A549 (cell line): ENCODE measurements at regions of chr15 and their contacts with region 1.

Region 1: DNA sequence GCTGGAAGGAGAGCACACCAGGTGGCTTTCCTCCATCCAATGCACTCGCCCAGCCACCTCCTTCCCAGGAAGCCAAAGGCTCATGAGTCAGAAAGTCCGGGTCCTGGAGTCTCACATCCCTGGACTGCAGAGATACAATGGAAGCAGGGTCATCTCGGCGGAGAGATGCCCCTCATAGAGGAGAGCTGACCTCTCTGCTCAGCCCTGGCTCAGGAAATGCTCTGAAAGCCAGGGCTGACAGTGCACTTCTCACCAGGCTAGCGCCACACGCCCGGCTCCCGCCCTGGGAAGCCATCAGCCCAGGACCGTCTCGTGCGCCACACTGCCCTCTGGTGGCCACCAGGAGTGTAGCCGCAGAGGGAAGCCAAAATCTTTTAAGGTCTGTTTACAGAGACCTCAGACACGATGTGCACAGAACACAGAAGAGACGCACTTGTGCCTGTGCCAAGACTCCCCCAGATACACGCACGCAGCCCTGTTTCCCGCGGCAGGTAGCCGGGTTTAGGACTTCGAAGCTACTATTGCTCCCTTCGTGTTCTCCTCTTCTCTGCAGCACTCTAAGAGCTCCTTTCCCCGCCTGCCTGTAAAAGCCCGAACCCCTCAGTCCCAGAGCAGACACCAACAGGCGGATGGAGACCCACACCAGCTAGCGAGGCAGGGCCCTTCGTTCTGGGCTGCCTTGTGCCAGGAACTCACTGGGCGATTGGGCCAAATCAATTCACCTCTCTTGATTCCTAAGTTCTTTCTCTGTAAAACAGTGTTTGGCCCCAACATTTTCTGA is 9.7 kb downstream of the NTRK3 start:
- DNase-seq: peak; percentile 82 to 84
- ATAC-seq: peak; percentile 83 to 94
- H3K4me3 ChIP-seq: 0 out of 3 replicates have a peak overlapping the region, but pooled peaks have one; percentile 16
- H3K27ac ChIP-seq: peak overlapping the region; percentile 59 to 85
- H3K4me1 ChIP-seq: peaks cover 24% of the 10 kb centered on the region
- CTCF ChIP-seq: peak; percentile 97
- EP300 ChIP-seq: no peak
- POLR2A ChIP-seq: no peak
- RAD21 ChIP-seq: peak; percentile 81

Region 2: GRCh38 chr15:86624261-86625036 is 1622.4 kb before region 1 on chr15:
- CTCF ChIA-PET with region 1: interaction called, 17 read pairs
- POLR2A ChIA-PET with region 1: no interaction called
- DNase-seq: peak; percentile 93 to 97
- ATAC-seq: peak; percentile 99 to 100
- H3K4me3 ChIP-seq: no peak overlapping the region
- H3K27ac ChIP-seq: peak overlapping the region in 1 of 2 experiments; percentile 66; a peak in 3 of 6 replicates
- H3K4me1 ChIP-seq: peaks cover 19% of the 10 kb centered on the region
- CTCF ChIP-seq: peak; percentile 91
- EP300 ChIP-seq: no peak
- POLR2A ChIP-seq: no peak
- RAD21 ChIP-seq: peak; percentile 97 to 99

Region 3: GRCh38 chr15:88232801-88233201 is 14.1 kb before region 1 on chr15:
- CTCF ChIA-PET with region 1: interaction called, 51 read pairs
- POLR2A ChIA-PET with region 1: no interaction called
- DNase-seq: no peak
- ATAC-seq: no peak
- H3K4me3 ChIP-seq: no peak overlapping the region
- H3K27ac ChIP-seq: no peak overlapping the region
- H3K4me1 ChIP-seq: peaks cover 15% of the 10 kb centered on the region
- CTCF ChIP-seq: no peak
- EP300 ChIP-seq: no peak
- POLR2A ChIP-seq: no peak
- RAD21 ChIP-seq: no peak

Region 4: DNA sequence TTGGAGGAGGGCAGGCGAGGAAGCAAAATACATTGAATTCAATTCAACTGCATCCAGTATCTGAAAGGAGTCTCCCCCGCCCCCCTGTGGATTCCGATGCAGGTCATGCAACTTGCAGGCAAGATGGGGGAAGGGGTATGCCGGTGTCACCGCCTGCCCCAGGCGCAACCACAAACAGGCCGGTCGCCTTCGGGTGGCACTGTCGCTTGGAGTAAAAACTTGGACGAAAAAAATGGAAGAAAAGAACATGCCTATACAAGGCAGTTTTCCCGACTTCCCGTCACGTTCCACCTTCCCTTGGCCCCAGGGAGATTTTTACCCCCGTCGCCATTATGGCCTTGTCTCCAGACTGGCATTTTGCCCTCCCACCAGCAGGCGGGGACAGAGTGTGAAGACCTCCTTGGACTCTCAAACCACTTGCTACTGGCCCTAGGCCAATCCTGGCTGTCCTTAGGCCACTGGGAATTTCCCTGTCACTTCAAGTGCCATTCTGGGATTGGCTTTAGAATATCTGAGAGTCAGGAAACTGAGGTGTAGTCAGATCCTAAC is 11.3 kb after region 1 on chr15:
- CTCF ChIA-PET with region 1: interaction called, 39 read pairs
- POLR2A ChIA-PET with region 1: no interaction called
- DNase-seq: peak; percentile 75 to 79
- ATAC-seq: peak; percentile 9 to 51; a peak in 3 of 6 replicates
- H3K4me3 ChIP-seq: peak overlapping the region; percentile 81
- H3K27ac ChIP-seq: peak overlapping the region; percentile 87 to 92
- H3K4me1 ChIP-seq: peaks cover 33% of the 10 kb centered on the region
- CTCF ChIP-seq: peak; percentile 45
- EP300 ChIP-seq: no peak
- POLR2A ChIP-seq: no peak
- RAD21 ChIP-seq: peak in 1 of 2 experiments; percentile 50; a peak in 3 of 5 replicates

Region 5: GRCh38 chr15:88274553-88275460 is 28.0 kb after region 1 on chr15:
- CTCF ChIA-PET with region 1: interaction called, 121 read pairs
- POLR2A ChIA-PET with region 1: no interaction called
- DNase-seq: peak; percentile 69 to 91
- ATAC-seq: peak; percentile 82 to 96
- H3K4me3 ChIP-seq: no peak overlapping the region
- H3K27ac ChIP-seq: peak overlapping the region; percentile 18 to 58; a peak in 4 of 6 replicates
- H3K4me1 ChIP-seq: peaks cover 10% of the 10 kb centered on the region; the same call in 2 of the 3 replicates
- CTCF ChIP-seq: peak; percentile 94
- EP300 ChIP-seq: no peak
- POLR2A ChIP-seq: no peak
- RAD21 ChIP-seq: peak; percentile 88 to 90

Region 6: GRCh38 chr15:88331280-88331679 is 84.4 kb after region 1 on chr15:
- CTCF ChIA-PET with region 1: interaction called, 11 read pairs
- POLR2A ChIA-PET with region 1: no interaction called
- DNase-seq: peak; percentile 72 to 80
- ATAC-seq: peak; percentile 62 to 92; a peak in 4 of 6 replicates
- H3K4me3 ChIP-seq: no peak overlapping the region
- H3K27ac ChIP-seq: peak overlapping the region in 1 of 2 experiments; percentile 17; a peak in 1 of 6 replicates
- H3K4me1 ChIP-seq: peaks cover 12% of the 10 kb centered on the region; the same call in 1 of the 3 replicates
- CTCF ChIP-seq: peak; percentile 49
- EP300 ChIP-seq: no peak
- POLR2A ChIP-seq: no peak
- RAD21 ChIP-seq: peak; percentile 44 to 63; a peak in 4 of 5 replicates

Region 7: DNA sequence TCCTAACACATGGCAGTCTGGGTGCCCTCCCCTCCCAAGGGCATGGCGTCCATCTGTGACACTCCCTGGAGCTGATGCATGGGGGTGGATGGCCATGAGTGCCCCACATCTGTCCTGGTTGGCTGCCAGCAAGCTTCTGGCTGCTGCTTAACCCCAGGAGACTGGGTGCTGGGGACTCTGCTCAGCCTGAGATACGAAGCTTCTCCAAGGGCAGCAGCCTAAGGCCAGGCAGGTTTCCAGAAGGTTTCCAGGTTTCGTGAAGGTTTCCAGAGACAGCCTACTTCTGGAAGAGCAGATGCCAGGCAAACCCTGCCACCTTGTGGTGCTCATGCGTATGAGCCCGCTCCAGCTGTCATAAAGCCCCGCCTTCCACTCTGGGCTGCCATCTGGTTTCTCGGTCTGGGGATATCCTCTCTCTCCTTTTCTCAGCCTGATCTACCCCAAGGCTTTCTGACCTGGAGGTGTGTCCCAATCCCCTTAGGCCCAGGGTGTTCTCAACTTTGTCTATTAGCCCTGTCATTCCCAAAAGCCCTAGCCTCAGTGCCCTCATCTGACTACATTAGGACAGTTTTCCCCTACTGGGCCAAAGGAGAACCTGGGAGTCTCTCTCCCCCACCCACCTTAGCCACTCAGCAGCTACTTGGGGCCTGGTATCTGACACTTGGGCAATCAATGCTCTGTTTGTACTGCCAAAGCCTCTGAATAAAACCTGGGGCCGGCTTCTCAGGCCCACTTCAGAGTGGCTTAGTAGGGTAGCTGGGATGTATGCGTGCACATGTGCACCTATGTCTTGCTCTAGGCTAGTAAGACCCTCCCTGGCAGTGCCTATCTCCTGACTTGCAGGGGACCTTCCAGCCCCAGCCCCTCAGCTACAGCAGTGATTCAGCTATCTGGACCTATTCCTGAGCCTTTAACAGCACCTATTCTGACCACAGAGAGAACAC is 208.3 kb after region 1 on chr15:
- CTCF ChIA-PET with region 1: interaction called, 201 read pairs
- POLR2A ChIA-PET with region 1: no interaction called
- DNase-seq: peak; percentile 78 to 84
- ATAC-seq: peak; percentile 90 to 96
- H3K4me3 ChIP-seq: no peak overlapping the region
- H3K27ac ChIP-seq: peak overlapping the region; percentile 14 to 61; a peak in 3 of 6 replicates
- H3K4me1 ChIP-seq: peaks cover 10% of the 10 kb centered on the region
- CTCF ChIP-seq: peak; percentile 83
- EP300 ChIP-seq: no peak
- POLR2A ChIP-seq: no peak
- RAD21 ChIP-seq: peak; percentile 86 to 88